ENCODE measurements at regions of chr18 and their contacts with region 1.

Region 1: DNA sequence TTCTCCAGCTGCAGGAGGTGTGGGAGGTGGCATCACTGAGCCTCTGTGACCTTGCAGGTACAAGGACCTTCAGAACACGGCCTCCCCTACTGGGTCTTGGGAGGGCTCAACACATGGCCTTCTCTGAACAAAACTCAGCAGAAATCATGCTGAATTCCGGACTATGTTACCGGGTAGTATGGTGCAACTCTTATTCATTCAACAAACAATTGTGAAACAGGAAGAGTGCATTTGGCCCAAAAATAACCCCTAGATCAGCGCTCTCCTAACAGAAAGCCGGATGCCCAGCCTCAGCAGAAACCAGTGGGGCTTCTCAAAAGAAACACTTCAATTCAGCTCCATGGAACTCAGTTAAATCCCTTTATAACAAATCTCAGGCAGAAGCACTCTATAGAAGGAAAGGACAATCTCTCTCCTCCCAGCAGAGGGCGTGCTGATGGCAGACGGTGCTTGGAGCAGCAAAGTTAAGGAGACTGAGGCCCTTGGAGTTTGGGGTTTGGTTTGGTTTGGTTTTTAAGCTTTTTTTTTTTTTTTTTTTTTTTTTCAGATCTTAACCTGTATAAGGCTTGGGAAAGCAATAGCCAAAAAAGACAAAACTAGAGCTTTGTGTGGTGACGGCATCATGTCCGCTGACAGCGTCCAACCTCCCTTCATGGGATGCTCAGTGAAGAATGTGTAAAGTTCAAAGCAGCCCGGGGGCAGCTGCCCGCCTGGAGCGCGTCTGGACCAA is 104.2 kb upstream of the SALL3 start:
- DNase-seq: peak; percentile 21
- H3K4me3 ChIP-seq: no peak overlapping the region
- H3K27ac ChIP-seq: no peak overlapping the region
- H3K4me1 ChIP-seq: no peaks in the 10 kb centered on the region
- CTCF ChIP-seq: peak; percentile 70

Region 2: DNA sequence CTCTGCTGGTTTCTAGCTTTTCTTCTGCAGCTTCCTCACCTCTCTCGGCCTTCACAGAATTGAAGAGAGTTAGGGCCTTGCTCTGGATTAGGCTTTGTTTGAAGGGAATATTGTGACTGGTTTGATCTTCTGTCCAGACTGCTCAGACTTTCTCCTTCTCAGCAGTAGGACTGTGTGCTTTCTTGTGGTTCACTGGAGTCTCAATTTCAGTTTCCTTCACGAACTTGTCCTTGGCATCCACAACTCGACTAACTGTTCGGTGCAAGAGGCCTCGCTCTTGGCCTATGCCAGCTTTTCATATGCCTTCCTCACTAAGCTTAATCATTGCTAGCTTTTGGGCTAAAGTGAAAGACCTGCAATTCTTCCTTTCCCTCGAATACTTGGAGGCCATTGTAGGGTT is 85.3 kb after region 1 on chr18:
- CTCF ChIA-PET with region 1: no interaction called
- POLR2A ChIA-PET with region 1: interaction called, 13 read pairs
- intact Hi-C with region 1: no loop called
- DNase-seq: no peak
- H3K4me3 ChIP-seq: no peak overlapping the region
- H3K27ac ChIP-seq: no peak overlapping the region
- H3K4me1 ChIP-seq: no peaks in the 10 kb centered on the region
- CTCF ChIP-seq: no peak

Measured in OCI-LY7 (cell line).